ENCODE measurements at regions of chr12 and their contacts with region 1.

Region 1: GRCh38 chr12:50222275-50222795 is 55.2 kb upstream of the CERS5 start:
- DNase-seq: no peak
- H3K4me3 ChIP-seq: peak overlapping the region; percentile 96
- CTCF ChIP-seq: peak; percentile 49

Region 2: DNA sequence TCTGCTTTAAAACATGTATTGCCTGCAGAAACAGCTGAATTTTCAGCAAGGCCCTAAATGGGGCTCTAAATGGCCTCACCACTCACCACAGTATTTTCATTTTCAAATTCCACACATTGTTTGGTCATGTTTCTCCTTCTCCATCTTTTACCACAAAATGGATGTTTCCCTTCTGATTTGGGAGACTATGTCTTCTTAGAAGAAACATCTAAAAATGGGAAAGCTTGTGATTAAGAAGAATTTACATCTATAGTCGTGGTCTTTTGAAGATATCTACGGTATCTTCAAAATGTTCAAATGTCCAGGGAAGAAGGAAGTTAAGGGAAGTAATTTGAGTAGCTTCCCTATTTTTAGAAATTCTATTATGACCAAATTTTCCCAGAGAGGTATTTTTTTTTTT is 978.2 kb before region 1 on chr12:
- CTCF ChIA-PET with region 1: no interaction called
- POLR2A ChIA-PET with region 1: no interaction called
- DNase-seq: peak; percentile 62
- H3K4me3 ChIP-seq: no peak overlapping the region
- CTCF ChIP-seq: no peak

Region 3: GRCh38 chr12:50211392-50212070 is 10.8 kb before region 1 on chr12:
- CTCF ChIA-PET with region 1: interaction called, 13 read pairs
- POLR2A ChIA-PET with region 1: interaction called, 25 read pairs
- DNase-seq: no peak
- H3K4me3 ChIP-seq: no peak overlapping the region
- CTCF ChIP-seq: no peak

Region 4: DNA sequence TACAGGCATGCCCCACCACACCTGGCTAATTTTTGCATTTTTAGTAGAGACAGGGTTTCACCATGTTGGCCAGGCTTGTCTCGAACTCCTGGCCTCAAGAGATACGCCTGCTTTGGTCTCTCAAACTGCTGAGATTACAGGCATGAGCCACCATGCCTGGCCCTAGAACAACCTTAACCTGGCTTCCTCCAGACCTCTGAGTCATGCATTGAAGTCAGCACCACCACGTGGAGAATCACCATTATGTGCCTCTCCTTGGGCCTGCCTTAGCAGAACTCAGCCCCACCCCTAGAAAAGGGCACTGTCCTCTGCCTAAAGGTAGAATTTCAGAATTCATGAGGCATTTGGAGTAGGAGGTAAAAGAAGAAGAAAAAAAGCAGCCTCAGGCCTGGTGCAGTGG is 12.0 kb after region 1 on chr12:
- CTCF ChIA-PET with region 1: interaction called, 11 read pairs
- POLR2A ChIA-PET with region 1: no interaction called
- DNase-seq: no peak
- H3K4me3 ChIP-seq: no peak overlapping the region
- CTCF ChIP-seq: no peak

Region 5: DNA sequence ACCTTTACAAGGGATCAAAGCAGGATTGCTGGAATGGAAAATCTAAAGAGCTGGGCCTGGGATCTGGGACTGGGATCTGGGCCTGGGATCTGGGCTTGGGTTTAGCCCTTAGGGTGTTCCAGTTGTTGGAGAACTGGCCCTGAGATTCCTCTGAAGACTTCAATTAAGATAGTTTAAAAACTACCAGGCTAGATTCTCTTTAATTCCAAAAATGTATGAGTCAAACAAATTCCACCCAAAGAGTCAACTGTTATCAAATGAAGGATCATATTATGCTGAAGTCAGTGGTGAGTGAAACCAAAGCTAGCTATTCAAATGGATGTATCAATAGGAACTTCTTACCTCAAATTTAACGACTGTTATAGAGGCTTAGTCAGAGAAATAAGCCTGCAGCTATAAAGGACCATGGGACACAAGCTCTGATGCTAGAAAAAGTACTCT is 20.4 kb after region 1 on chr12:
- CTCF ChIA-PET with region 1: interaction called, 21 read pairs
- POLR2A ChIA-PET with region 1: interaction called, 19 read pairs
- DNase-seq: peak; percentile 63
- H3K4me3 ChIP-seq: peak overlapping the region; percentile 3; the same call in 1 of the 2 replicates
- CTCF ChIP-seq: no peak

Region 6: DNA sequence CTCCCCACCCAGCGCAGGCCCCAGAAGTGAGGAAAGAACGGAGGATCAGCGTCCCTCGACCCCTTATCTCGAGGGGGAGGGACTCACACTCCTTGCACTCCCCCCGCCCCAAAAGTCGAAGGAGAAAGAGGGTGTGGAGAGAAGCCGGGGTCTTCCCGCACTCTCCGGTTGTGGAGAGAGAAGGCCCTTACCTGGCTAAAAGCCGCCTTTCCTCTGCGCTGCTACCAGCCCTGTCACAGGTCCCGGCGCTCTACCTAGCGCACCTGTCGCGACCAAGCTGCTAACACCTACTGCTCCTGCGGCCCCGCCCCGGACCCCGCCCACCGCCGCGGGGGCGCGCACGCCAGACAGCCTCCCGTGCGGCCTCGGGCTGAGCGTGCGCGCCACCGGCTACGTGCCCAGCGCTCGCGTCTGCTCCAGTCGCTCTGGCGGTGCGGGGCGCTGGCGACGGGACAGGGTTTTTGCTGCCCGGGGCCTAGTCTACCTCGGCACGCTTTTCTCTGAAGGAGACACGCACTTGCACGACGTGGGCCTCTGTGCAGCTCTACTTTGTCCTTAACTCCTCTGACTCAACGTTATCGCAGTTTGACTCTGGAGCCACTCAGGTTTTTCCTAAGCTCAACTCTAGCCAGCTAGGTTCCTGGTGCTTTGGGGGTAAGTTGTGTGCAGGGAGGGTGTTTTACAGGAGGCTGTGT is 61.0 kb after region 1 on chr12 and contains the start of gene LIMA1:
- CTCF ChIA-PET with region 1: interaction called, 6 read pairs
- POLR2A ChIA-PET with region 1: interaction called, 12 read pairs
- DNase-seq: no peak
- H3K4me3 ChIP-seq: peak within 1 kb of the TSS; percentile 93
- CTCF ChIP-seq: peak; percentile 82